OCI-LY7 (cell line): ENCODE measurements at regions of chr7 and their contacts with region 1.

Region 1: GRCh38 chr7:86914551-86914950 is 144.9 kb downstream of the ELAPOR2 start:
- DNase-seq: peak; percentile 37
- H3K4me3 ChIP-seq: no peak overlapping the region
- H3K27ac ChIP-seq: no peak overlapping the region
- H3K4me1 ChIP-seq: no peaks in the 10 kb centered on the region
- CTCF ChIP-seq: peak; percentile 88

Region 2: DNA sequence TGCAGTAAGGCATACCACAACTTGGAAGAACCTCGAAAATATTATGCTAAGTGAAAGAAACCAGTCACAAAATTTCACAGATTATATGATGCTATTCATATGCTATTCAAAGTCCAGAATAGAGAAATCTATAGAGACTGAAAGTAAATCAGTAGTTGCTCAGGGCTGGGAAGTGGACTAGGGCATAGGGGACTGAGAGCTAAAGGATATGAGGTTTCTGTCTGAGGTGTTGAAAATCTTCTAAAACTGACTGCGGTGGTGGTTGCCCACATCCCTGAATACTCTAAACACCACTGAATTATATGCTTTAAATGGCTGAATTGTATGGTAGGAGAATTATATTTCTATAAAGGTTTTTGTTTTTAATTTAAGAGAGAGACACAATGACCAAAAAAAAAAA is 16.4 kb before region 1 on chr7:
- CTCF ChIA-PET with region 1: no interaction called
- POLR2A ChIA-PET with region 1: no interaction called
- intact Hi-C with region 1: no loop called
- DNase-seq: no peak
- H3K4me3 ChIP-seq: no peak overlapping the region
- H3K27ac ChIP-seq: no peak overlapping the region
- H3K4me1 ChIP-seq: no peaks in the 10 kb centered on the region
- CTCF ChIP-seq: no peak

Region 3: GRCh38 chr7:87225696-87226095 is 311.1 kb after region 1 on chr7:
- CTCF ChIA-PET with region 1: no interaction called
- POLR2A ChIA-PET with region 1: no interaction called
- intact Hi-C with region 1: no loop called
- DNase-seq: no peak
- H3K4me3 ChIP-seq: no peak overlapping the region
- H3K27ac ChIP-seq: no peak overlapping the region
- H3K4me1 ChIP-seq: peaks cover 20% of the 10 kb centered on the region
- CTCF ChIP-seq: 0 out of 2 replicates have a peak, but pooled peaks have one; percentile 28

Region 4: DNA sequence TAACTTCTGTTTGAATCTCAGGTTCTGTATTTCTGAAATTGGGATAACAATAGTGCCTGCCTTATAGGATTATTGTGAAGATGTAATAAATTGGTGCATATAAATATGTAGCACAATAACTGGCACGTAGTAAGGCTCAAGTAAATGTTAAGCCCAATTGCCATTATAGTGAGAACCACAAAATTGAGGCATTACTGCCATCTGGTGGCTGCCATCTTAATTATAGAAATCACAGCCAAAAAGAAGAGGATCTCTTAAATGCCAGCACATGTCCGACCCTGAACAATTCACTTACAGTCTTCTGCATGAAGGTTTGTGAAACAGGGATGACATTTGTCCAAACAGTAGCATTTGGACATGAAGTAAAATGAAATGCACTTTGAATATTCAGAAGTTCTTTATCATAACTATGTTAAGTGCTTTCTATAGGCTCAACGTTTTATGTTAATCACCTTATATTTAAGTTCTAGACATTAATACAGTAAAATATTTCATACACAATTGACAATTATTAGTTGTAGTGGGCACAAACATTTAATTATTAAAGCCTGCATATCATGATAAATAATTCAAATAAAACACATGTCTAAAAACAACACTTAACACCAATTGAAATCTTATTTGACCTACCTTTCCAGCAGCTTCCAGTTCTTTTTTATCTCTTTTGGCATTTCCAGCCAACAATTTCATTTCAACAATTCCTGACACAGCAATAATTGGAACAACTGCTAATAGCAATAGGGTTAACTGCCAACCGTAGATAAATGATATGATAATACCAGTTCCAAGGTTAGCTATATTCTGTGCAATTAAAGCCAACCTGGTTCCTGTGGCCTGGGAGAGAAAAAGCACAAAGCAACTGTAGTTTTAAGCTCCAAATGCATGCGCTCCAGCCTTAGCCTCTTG is 502.4 kb after region 1 on chr7:
- CTCF ChIA-PET with region 1: no interaction called
- POLR2A ChIA-PET with region 1: no interaction called
- intact Hi-C with region 1: loop called (anchors 5 kb)
- DNase-seq: peak; percentile 75
- H3K4me3 ChIP-seq: no peak overlapping the region
- H3K27ac ChIP-seq: no peak overlapping the region
- H3K4me1 ChIP-seq: no peaks in the 10 kb centered on the region
- CTCF ChIP-seq: peak; percentile 90